ENCODE measurements at regions of chr2 and their contacts with region 1.

Region 1: GRCh38 chr2:190069936-190070696 is 7.6 kb upstream of the MSTN start:
- DNase-seq: peak; percentile 33
- H3K4me3 ChIP-seq: no peak overlapping the region
- H3K27ac ChIP-seq: no peak overlapping the region
- H3K4me1 ChIP-seq: no peaks in the 10 kb centered on the region
- H3K27me3 ChIP-seq: no peaks in the 10 kb centered on the region
- CTCF ChIP-seq: peak; percentile 36

Region 2: DNA sequence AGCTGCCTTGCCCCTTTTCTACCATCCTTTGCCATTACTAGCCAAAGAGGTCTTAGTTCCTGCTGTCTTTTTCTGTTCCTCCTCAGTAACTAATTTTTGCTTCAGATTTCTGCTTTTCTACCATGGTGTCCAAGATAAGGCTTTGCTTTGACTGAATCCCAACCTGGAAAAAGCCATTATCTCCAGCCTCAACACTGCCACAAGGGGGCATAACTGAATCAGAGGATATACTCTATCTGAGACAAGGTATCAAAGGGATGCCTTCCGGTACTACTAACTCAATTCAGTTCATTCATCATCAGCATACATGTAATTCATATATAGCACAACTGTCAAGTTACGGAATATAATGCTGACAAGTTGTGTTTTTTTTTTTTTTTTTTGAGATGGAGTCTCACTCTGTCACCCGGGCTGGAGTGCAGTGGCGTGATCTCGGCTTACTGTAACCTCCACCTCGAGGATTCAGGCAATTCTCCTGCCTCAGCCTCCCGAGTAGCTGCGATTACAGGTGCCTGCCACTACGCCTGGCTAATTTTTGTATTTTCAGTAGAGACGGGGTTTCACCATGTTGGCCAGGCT is 318.9 kb before region 1 on chr2:
- intact Hi-C with region 1: loop called (anchors 5 kb)
- DNase-seq: peak; percentile 46
- H3K4me3 ChIP-seq: no peak overlapping the region
- H3K27ac ChIP-seq: no peak overlapping the region
- H3K4me1 ChIP-seq: no peaks in the 10 kb centered on the region
- H3K27me3 ChIP-seq: no peaks in the 10 kb centered on the region
- CTCF ChIP-seq: peak; percentile 39

Measured in colonic mucosa (tissue), 4 donors.